CD4-positive, alpha-beta memory T cell (primary cell): ENCODE measurements at regions of chr1 and their contacts with region 1.

Region 1: DNA sequence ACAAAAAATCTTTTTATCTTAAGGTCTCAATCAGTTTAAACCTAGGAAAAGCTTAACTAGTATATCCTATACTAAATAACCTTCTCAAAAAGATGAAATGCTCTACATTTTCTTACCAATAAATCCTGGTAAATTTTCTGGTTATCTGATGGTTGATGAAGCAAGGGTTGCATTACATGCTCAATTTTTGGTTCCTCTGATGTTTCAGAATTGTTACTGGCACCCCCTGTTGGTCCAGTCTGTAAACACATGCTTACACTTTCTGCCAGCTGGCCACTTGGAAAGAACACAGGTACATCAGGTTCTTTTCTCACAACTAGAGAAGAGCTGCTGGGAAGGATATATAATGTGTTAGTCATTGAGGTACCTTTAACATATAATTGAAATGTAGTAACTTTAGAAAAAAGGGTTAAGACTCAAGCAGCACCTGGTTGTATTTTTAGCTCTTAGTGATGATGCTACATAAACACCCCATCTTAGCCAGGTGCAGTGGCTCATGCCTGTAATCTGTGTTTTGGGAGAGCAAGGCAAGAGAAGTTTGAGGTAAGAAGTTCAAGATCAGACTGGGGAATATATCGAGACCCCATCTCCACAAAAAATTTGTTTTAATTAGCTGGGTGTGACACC is 30.9 kb upstream of the TAL1 start:
- DNase-seq: peak in 4 of 5 donors; percentile 8 to 32 (median 16)
- H3K4me3 ChIP-seq: no peak overlapping the region
- H3K4me3 Mint-ChIP-seq: no peak overlapping the region
- H3K27ac ChIP-seq: no peak overlapping the region
- H3K27ac Mint-ChIP-seq: no peak overlapping the region
- H3K4me1 ChIP-seq: no peaks in the 10 kb centered on the region
- H3K4me1 Mint-ChIP-seq: no peaks in the 10 kb centered on the region
- H3K27me3 ChIP-seq: no peaks in the 10 kb centered on the region
- H3K27me3 Mint-ChIP-seq: no peaks in the 10 kb centered on the region

Region 2: GRCh38 chr1:47128221-47128620 is 134.7 kb before region 1 on chr1:
- CTCF ChIA-PET with region 1: no interaction called
- POLR2A ChIA-PET with region 1: no interaction called
- intact Hi-C with region 1: no loop called
- DNase-seq: no peak
- H3K4me3 ChIP-seq: no peak overlapping the region
- H3K4me3 Mint-ChIP-seq: no peak overlapping the region
- H3K27ac ChIP-seq: no peak overlapping the region
- H3K27ac Mint-ChIP-seq: no peak overlapping the region
- H3K4me1 ChIP-seq: no peaks in the 10 kb centered on the region
- H3K4me1 Mint-ChIP-seq: no peaks in the 10 kb centered on the region
- H3K27me3 ChIP-seq: no peaks in the 10 kb centered on the region
- H3K27me3 Mint-ChIP-seq: peaks cover 13 to 16% of the 10 kb centered on the region in 2 donors

Region 3: GRCh38 chr1:47179017-47179987 is 83.6 kb before region 1 on chr1:
- CTCF ChIA-PET with region 1: interaction called, 22 read pairs
- POLR2A ChIA-PET with region 1: no interaction called
- intact Hi-C with region 1: no loop called
- DNase-seq: peak; percentile 45 to 60 (median 58)
- H3K4me3 ChIP-seq: peak overlapping the region; percentile 34 to 53
- H3K4me3 Mint-ChIP-seq: peak overlapping the region; percentile 76 to 88 (median 86)
- H3K27ac ChIP-seq: no peak overlapping the region
- H3K27ac Mint-ChIP-seq: peak overlapping the region in 3 of 7 donors; percentile 32 to 75 (median 66)
- H3K4me1 ChIP-seq: peaks cover 7% of the 10 kb centered on the region
- H3K4me1 Mint-ChIP-seq: peaks cover 9 to 17% (median 13%) of the 10 kb centered on the region in 4 donors
- H3K27me3 ChIP-seq: peaks cover 10% of the 10 kb centered on the region
- H3K27me3 Mint-ChIP-seq: peaks cover 15 to 40% of the 10 kb centered on the region in 2 donors

Region 4: GRCh38 chr1:47252369-47252768 is 10.5 kb before region 1 on chr1:
- CTCF ChIA-PET with region 1: interaction called, 14 read pairs
- POLR2A ChIA-PET with region 1: interaction called, 4 read pairs
- intact Hi-C with region 1: no loop called
- DNase-seq: no peak
- H3K4me3 ChIP-seq: no peak overlapping the region
- H3K4me3 Mint-ChIP-seq: no peak overlapping the region
- H3K27ac ChIP-seq: no peak overlapping the region
- H3K27ac Mint-ChIP-seq: no peak overlapping the region
- H3K4me1 ChIP-seq: no peaks in the 10 kb centered on the region
- H3K4me1 Mint-ChIP-seq: no peaks in the 10 kb centered on the region
- H3K27me3 ChIP-seq: no peaks in the 10 kb centered on the region
- H3K27me3 Mint-ChIP-seq: no peaks in the 10 kb centered on the region

Region 5: GRCh38 chr1:47276850-47277249 is 13.9 kb after region 1 on chr1:
- CTCF ChIA-PET with region 1: interaction called, 15 read pairs
- POLR2A ChIA-PET with region 1: no interaction called
- intact Hi-C with region 1: no loop called
- DNase-seq: no peak
- H3K4me3 ChIP-seq: no peak overlapping the region
- H3K4me3 Mint-ChIP-seq: no peak overlapping the region
- H3K27ac ChIP-seq: no peak overlapping the region
- H3K27ac Mint-ChIP-seq: no peak overlapping the region
- H3K4me1 ChIP-seq: no peaks in the 10 kb centered on the region
- H3K4me1 Mint-ChIP-seq: peaks cover 0 to 2% (median 0%) of the 10 kb centered on the region in 4 donors
- H3K27me3 ChIP-seq: no peaks in the 10 kb centered on the region
- H3K27me3 Mint-ChIP-seq: no peaks in the 10 kb centered on the region

Region 6: DNA sequence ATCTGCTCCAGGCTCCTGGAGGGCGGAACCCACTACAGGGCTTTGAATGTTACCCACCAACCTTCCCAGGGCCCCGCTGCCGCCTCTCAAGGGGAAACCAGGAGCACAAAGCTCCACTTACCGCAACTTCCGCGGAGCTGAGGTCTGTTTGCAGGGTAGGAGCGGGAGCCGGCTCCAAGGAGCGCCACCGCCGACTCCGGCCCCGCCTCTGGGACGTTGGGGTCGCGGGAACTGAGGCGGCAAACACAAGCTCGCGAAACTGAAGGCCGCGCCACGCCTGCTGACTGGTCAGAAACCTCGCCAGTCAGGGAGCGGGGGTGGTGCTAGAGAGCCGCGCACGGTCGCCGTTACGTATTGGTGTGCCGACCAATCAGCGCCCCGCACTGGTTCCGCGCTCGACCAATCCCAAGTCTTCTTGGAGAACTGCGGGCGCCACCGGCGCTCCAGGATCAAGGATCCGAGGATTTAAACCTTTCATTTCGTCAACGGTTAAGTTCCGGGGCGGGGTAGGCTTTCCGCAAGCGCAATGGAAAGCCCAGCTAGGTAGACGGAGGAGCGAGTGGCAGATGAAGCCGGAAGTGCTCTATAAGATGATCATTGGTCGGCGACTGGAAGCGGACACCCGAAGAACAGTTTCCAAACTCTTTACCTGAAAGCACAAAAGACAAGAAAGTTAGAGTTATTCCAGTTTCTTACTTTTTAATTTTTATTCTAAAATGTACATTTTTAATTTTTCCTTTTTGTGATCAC is 51.2 kb after region 1 on chr1 and contains the start of gene STIL:
- CTCF ChIA-PET with region 1: interaction called, 10 read pairs
- POLR2A ChIA-PET with region 1: no interaction called
- intact Hi-C with region 1: no loop called
- DNase-seq: peak; percentile 95 to 98 (median 97)
- H3K4me3 ChIP-seq: peak within 1 kb of the TSS; percentile 49 to 91
- H3K4me3 Mint-ChIP-seq: peak within 1 kb of the TSS; percentile 89 to 100 (median 93)
- H3K27ac ChIP-seq: peak within 1 kb of the TSS; percentile 56
- H3K27ac Mint-ChIP-seq: peak within 1 kb of the TSS; percentile 93 to 99 (median 96)
- H3K4me1 ChIP-seq: peaks cover 5% of the 10 kb centered on the region
- H3K4me1 Mint-ChIP-seq: peaks cover 7 to 22% (median 12%) of the 10 kb centered on the region in 4 donors
- H3K27me3 ChIP-seq: no peaks in the 10 kb centered on the region
- H3K27me3 Mint-ChIP-seq: no peaks in the 10 kb centered on the region
- total RNA-seq, gene STIL: 1.6 to 2.6 TPM

Region 7: GRCh38 chr1:47333922-47334764 is 71.2 kb after region 1 on chr1:
- CTCF ChIA-PET with region 1: interaction called, 13 read pairs
- POLR2A ChIA-PET with region 1: interaction called, 3 read pairs
- intact Hi-C with region 1: no loop called
- DNase-seq: peak; percentile 74 to 85 (median 79)
- H3K4me3 ChIP-seq: peak overlapping the region; percentile 86 to 99
- H3K4me3 Mint-ChIP-seq: peak overlapping the region; percentile 91 to 94 (median 93)
- H3K27ac ChIP-seq: peak overlapping the region; percentile 88
- H3K27ac Mint-ChIP-seq: peak overlapping the region in 6 of 7 donors; percentile 90 to 96 (median 92)
- H3K4me1 ChIP-seq: peaks cover 40% of the 10 kb centered on the region
- H3K4me1 Mint-ChIP-seq: peaks cover 10 to 28% (median 15%) of the 10 kb centered on the region in 4 donors
- H3K27me3 ChIP-seq: no peaks in the 10 kb centered on the region
- H3K27me3 Mint-ChIP-seq: no peaks in the 10 kb centered on the region

Region 8: DNA sequence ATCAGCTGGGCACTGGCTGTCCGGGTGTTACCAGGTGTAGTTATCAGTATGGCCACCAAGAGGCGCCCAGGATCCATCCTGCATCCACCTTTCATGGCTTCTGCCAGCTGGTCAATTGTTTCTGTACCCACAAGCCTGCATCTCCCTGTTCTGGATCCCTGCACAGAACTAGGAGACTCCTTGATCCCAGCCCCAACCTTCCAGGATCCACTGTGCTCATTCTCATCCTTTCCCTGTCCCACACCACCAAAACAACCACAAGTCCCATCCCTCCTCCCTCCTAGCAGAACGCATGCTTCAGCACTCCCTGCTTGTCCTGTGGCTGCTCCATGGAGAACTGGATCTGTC is 126.0 kb after region 1 on chr1:
- CTCF ChIA-PET with region 1: no interaction called
- POLR2A ChIA-PET with region 1: no interaction called
- intact Hi-C with region 1: no loop called
- DNase-seq: peak in 3 of 5 donors; percentile 13 to 20 (median 16)
- H3K4me3 ChIP-seq: no peak overlapping the region
- H3K4me3 Mint-ChIP-seq: no peak overlapping the region
- H3K27ac ChIP-seq: no peak overlapping the region
- H3K27ac Mint-ChIP-seq: peak overlapping the region in 2 of 7 donors; percentile 46 to 47
- H3K4me1 ChIP-seq: no peaks in the 10 kb centered on the region
- H3K4me1 Mint-ChIP-seq: peaks cover 0 to 2% (median under 1%) of the 10 kb centered on the region in 4 donors
- H3K27me3 ChIP-seq: no peaks in the 10 kb centered on the region
- H3K27me3 Mint-ChIP-seq: peaks cover 2 to 10% of the 10 kb centered on the region in 2 donors

Region 9: GRCh38 chr1:47416319-47417169 is 153.6 kb after region 1 on chr1:
- CTCF ChIA-PET with region 1: no interaction called
- POLR2A ChIA-PET with region 1: no interaction called
- intact Hi-C with region 1: no loop called
- DNase-seq: no peak
- H3K4me3 ChIP-seq: no peak overlapping the region
- H3K4me3 Mint-ChIP-seq: peak overlapping the region in 7 of 8 donors; percentile 58 to 82 (median 68)
- H3K27ac ChIP-seq: no peak overlapping the region
- H3K27ac Mint-ChIP-seq: peak overlapping the region in 1 of 7 donors; percentile 32
- H3K4me1 ChIP-seq: no peaks in the 10 kb centered on the region
- H3K4me1 Mint-ChIP-seq: peaks cover 0 to 22% (median 3%) of the 10 kb centered on the region in 4 donors
- H3K27me3 ChIP-seq: peaks cover 9% of the 10 kb centered on the region
- H3K27me3 Mint-ChIP-seq: peaks cover 35% of the 10 kb centered on the region in 2 donors